Esophagus muscularis mucosa (tissue), 4 donors: ENCODE measurements at regions of chr19 and their contacts with region 1.

Region 1: GRCh38 chr19:18063463-18063862 is 23.3 kb downstream of the IL12RB1 start:
- DNase-seq: no peak
- H3K4me3 ChIP-seq: no peak overlapping the region
- H3K27ac ChIP-seq: no peak overlapping the region
- H3K4me1 ChIP-seq: peaks cover 3 to 5% (median 3%) of the 10 kb centered on the region in 4 donors
- H3K27me3 ChIP-seq: peaks cover 0 to 17% (median 0%) of the 10 kb centered on the region in 4 donors
- CTCF ChIP-seq: no peak
- EP300 ChIP-seq: no peak
- POLR2A ChIP-seq: no peak

Region 2: GRCh38 chr19:17830567-17831418 is 232.7 kb before region 1 on chr19:
- intact Hi-C with region 1: no loop called
- DNase-seq: no peak
- H3K4me3 ChIP-seq: peak overlapping the region in 3 of 4 donors; percentile 30 to 48 (median 31)
- H3K27ac ChIP-seq: no peak overlapping the region
- H3K4me1 ChIP-seq: peaks cover 0 to 21% (median 20%) of the 10 kb centered on the region in 4 donors
- H3K27me3 ChIP-seq: peaks cover 0 to 92% (median 22%) of the 10 kb centered on the region in 4 donors
- CTCF ChIP-seq: no peak
- EP300 ChIP-seq: no peak
- POLR2A ChIP-seq: no peak

Region 3: GRCh38 chr19:17947815-17948513 is 115.5 kb before region 1 on chr19:
- intact Hi-C with region 1: loop called (anchors 10 kb)
- DNase-seq: peak; percentile 94
- H3K4me3 ChIP-seq: peak overlapping the region; percentile 85 to 93 (median 90)
- H3K27ac ChIP-seq: peak overlapping the region; percentile 58 to 76 (median 71)
- H3K4me1 ChIP-seq: peaks cover 44 to 83% (median 78%) of the 10 kb centered on the region in 4 donors
- H3K27me3 ChIP-seq: peaks cover 8 to 49% (median 31%) of the 10 kb centered on the region in 4 donors
- CTCF ChIP-seq: no peak
- EP300 ChIP-seq: no peak
- POLR2A ChIP-seq: no peak